Prostate gland (tissue), 2 donors: ENCODE measurements at regions of chr2 and their contacts with region 1.

Region 1: DNA sequence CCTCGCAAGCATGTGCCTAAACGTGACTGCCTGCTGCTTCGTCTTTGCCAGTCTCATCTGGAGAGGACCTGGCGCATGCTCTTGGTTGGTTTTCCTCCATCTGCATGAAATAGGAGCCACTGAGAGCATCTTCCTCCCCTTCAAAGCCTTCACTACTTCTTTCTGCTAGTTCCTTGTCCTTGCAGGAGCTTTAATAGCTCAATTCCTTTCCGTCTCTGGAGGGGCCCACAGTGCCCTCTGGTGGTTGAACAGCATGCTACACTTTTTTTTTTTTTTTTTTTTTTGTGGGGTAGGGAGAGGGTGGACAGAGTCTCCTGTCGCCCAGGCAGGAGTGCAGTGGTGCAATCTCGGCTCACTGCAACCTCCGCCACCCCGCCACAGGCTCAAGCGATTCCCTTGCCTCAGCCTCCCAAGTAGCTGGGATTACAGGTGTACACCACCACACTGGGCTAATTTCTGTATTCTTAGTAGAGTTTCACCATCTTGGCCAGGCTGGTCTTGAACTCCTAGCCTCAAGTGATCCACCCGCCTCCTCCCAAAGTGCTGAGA is 59.6 kb downstream of the SP110 start:
- DNase-seq: no peak
- H3K4me3 ChIP-seq: no peak overlapping the region
- H3K27ac ChIP-seq: no peak overlapping the region
- H3K4me1 ChIP-seq: no peaks in the 10 kb centered on the region
- H3K27me3 ChIP-seq: no peaks in the 10 kb centered on the region
- CTCF ChIP-seq: peak; percentile 64 to 75 (median 67)
- POLR2A ChIP-seq: no peak

Region 2: DNA sequence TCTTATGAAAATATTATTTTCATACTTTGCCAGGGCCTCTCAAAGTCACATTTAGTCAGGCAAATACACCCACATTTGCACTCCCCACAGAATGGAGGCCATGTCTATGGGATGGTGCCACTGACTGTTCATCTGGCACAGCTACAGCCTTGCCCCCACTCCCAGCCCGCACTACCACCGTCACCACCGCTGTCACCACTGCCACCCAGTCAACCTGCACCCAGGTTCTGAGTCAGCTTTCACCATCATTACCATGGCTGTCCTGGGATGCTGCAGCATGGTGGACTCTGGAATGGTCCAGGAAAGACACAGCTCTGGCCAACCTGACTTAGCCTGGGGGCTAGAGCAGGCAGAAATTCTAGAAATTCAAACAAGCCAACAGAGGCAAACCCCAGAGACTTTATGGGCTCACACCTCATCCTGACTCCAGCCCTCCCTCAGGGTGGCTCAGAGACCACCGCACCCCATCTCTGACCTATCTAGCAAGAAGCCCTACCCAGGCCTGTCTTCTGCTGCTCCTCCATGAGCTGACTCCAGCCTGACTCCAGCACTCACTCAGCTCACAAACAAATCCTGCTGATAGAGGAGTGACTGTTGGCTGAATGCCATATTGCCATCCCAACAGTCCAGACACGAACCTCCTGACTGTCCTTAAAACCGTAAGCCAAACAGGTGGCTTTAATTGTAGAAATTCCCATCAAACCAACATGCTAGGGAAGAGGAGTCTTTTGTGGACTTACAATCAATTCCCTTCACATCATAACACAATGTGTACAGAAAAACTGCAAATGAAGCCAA is 473.9 kb before region 1 on chr2:
- intact Hi-C with region 1: no loop called
- DNase-seq: no peak
- H3K4me3 ChIP-seq: no peak overlapping the region
- H3K27ac ChIP-seq: no peak overlapping the region
- H3K4me1 ChIP-seq: no peaks in the 10 kb centered on the region
- H3K27me3 ChIP-seq: no peaks in the 10 kb centered on the region
- CTCF ChIP-seq: no peak
- POLR2A ChIP-seq: no peak

Region 3: GRCh38 chr2:230124757-230125431 is 35.3 kb before region 1 on chr2:
- intact Hi-C with region 1: no loop called
- DNase-seq: no peak
- H3K4me3 ChIP-seq: no peak overlapping the region
- H3K27ac ChIP-seq: no peak overlapping the region
- H3K4me1 ChIP-seq: no peaks in the 10 kb centered on the region
- H3K27me3 ChIP-seq: no peaks in the 10 kb centered on the region
- CTCF ChIP-seq: no peak
- POLR2A ChIP-seq: no peak

Region 4: GRCh38 chr2:230234845-230235244 is 74.7 kb after region 1 on chr2:
- intact Hi-C with region 1: no loop called
- DNase-seq: no peak
- H3K4me3 ChIP-seq: no peak overlapping the region
- H3K27ac ChIP-seq: no peak overlapping the region
- H3K4me1 ChIP-seq: no peaks in the 10 kb centered on the region
- H3K27me3 ChIP-seq: no peaks in the 10 kb centered on the region
- CTCF ChIP-seq: no peak
- POLR2A ChIP-seq: no peak

Region 5: GRCh38 chr2:230614913-230615332 is 454.7 kb after region 1 on chr2:
- intact Hi-C with region 1: loop called (anchors 5 kb)
- DNase-seq: no peak
- H3K4me3 ChIP-seq: no peak overlapping the region
- H3K27ac ChIP-seq: no peak overlapping the region
- H3K4me1 ChIP-seq: no peaks in the 10 kb centered on the region
- H3K27me3 ChIP-seq: no peaks in the 10 kb centered on the region
- CTCF ChIP-seq: no peak
- POLR2A ChIP-seq: no peak